Right cardiac atrium (tissue), 5 donors: ENCODE measurements at regions of chr4 and their contacts with region 1.

Region 1: GRCh38 chr4:27000820-27001219 is 140.2 kb downstream of the STIM2 start:
- DNase-seq: no peak
- ATAC-seq: no peak
- H3K4me3 ChIP-seq: no peak overlapping the region
- H3K27ac ChIP-seq: no peak overlapping the region
- H3K4me1 ChIP-seq: no peaks in the 10 kb centered on the region
- H3K27me3 ChIP-seq: no peaks in the 10 kb centered on the region

Region 2: GRCh38 chr4:26330186-26330787 is 670.5 kb before region 1 on chr4:
- intact Hi-C with region 1: loop called in 1 of 4 experiments (anchors 10 kb)
- DNase-seq: no peak
- ATAC-seq: peak; percentile 67 to 68
- H3K4me3 ChIP-seq: no peak overlapping the region
- H3K27ac ChIP-seq: no peak overlapping the region
- H3K4me1 ChIP-seq: peaks cover 8% of the 10 kb centered on the region
- H3K27me3 ChIP-seq: no peaks in the 10 kb centered on the region

Region 3: DNA sequence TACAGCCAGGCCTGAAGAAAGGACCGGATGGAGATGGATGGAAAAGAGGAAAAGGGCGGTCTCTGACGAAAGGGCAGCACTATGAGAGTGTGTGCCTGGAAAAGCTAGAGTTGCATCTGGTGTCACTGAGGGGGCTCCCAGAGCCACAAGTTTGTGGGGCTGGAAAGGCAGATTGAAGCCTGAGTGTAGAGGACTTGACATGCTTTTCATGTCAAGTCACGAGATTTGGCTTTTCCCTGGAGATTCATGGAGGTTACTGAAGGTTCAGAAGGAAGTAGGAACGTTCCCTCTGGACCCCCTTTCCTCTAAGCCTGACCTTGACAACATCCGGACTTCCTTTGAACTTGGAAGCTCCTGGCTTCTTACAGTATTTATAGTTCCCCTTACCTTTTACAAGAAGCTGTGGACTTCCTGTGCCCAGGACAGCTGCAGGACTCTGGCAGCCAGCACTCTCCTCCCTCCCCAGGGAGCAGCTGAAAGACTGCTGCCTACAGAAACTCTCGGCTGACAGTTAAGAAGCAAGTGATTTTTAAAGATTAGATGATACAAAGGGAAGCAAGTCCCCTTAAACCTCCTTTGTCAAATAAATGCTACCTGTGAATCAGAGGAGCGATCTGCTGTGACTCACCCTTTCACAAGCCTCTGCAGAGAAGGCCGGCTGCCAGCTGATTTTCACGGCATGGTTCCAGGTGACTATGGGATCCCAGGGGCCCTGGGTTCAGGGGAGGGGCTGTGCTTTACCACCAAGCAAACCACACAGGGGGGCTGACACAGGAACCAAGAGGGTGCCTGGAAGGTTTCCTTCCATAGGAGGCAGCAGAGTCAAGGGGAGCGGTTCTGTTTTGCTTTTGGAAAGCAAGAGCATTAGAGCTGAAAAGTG is 213.1 kb before region 1 on chr4:
- intact Hi-C with region 1: loop called in 1 of 4 experiments (anchors 5 kb)
- DNase-seq: peak; percentile 33 to 62 (median 57)
- ATAC-seq: peak; percentile 60 to 80
- H3K4me3 ChIP-seq: no peak overlapping the region
- H3K27ac ChIP-seq: peak overlapping the region; percentile 1
- H3K4me1 ChIP-seq: peaks cover 4% of the 10 kb centered on the region
- H3K27me3 ChIP-seq: no peaks in the 10 kb centered on the region

Region 4: GRCh38 chr4:26860157-26860921 is 140.5 kb before region 1 on chr4 and contains the start of gene STIM2:
- intact Hi-C with region 1: loop called in 2 of 4 experiments (anchors 10 kb)
- DNase-seq: peak; percentile 96 to 99 (median 98)
- ATAC-seq: peak; percentile 93 to 95
- H3K4me3 ChIP-seq: peak within 1 kb of the TSS; percentile 91
- H3K27ac ChIP-seq: peak within 1 kb of the TSS; percentile 98
- H3K4me1 ChIP-seq: peaks cover 3% of the 10 kb centered on the region
- H3K27me3 ChIP-seq: no peaks in the 10 kb centered on the region
- total RNA-seq, gene STIM2: 13.9 to 20.8 (median 17.4) TPM

Region 5: GRCh38 chr4:27101561-27101960 is 100.7 kb after region 1 on chr4:
- intact Hi-C with region 1: no loop called
- DNase-seq: no peak
- ATAC-seq: no peak
- H3K4me3 ChIP-seq: no peak overlapping the region
- H3K27ac ChIP-seq: no peak overlapping the region
- H3K4me1 ChIP-seq: no peaks in the 10 kb centered on the region
- H3K27me3 ChIP-seq: no peaks in the 10 kb centered on the region